HepG2 (cell line): ENCODE measurements at regions of chr5 and their contacts with region 1.

Region 1: DNA sequence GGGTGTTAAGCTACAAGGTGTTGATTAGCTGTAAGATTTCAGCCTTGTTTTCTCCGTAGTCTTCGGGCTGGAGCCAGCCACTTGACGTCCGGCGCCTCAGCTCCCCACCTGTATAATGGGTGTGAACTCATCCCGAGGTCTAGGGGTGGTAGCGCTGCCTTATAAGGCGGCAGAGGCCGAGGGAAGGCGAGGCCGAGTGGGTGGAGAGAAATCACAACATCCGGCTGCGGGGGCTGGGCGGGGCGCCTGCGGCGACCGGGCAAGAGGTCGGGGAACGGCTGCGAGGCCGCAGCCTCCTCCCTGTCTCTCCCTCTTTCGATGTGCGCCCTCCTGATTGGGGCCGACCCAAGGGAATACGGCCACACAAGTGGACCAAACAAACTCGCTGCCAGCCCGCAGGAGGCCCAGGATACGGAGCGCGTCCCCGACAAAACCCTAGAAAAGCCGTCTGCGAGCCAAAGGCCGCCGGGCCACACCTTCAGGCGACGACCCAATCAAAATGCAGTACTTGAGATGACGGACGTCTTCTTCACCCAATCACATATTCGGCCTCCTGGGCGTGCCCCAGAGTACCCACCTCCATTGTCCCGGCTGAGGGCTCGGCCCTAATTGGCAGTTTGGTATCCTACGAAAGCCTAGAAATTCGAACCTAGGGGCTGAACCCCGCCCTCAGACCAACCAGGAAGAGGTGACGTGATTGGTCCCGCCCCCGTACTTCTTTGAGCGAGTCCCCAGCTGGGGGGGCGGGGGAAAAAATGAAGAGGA is 493 bp upstream of the GRK6 start:
- DNase-seq: peak; percentile 100
- ATAC-seq: peak; percentile 94
- H3K4me3 ChIP-seq: peak overlapping the region; percentile 47 to 73 (median 62); a peak in 5 of 6 replicates
- H3K27ac ChIP-seq: peak overlapping the region; percentile 83
- H3K4me1 ChIP-seq: peaks cover 43% of the 10 kb centered on the region
- H3K27me3 ChIP-seq: peaks cover 0 to 14% of the 10 kb centered on the region in 2 experiments; a peak in 2 of 5 replicates
- CTCF ChIP-seq: no peak
- EP300 ChIP-seq: no peak
- POLR2A ChIP-seq: peak in 1 of 2 experiments; percentile 70; a peak in 1 of 4 replicates
- RAD21 ChIP-seq: peak; percentile 45; the same call in 1 of the 2 replicates

Region 2: GRCh38 chr5:177370488-177371119 is 55.4 kb before region 1 on chr5:
- CTCF ChIA-PET with region 1: no interaction called
- POLR2A ChIA-PET with region 1: interaction called, 10 read pairs
- in situ Hi-C with region 1: no loop called
- intact Hi-C with region 1: no loop called
- DNase-seq: peak; percentile 94
- ATAC-seq: peak; percentile 82
- H3K4me3 ChIP-seq: peak overlapping the region in 2 of 3 experiments; percentile 74 to 92; a peak in 3 of 6 replicates
- H3K27ac ChIP-seq: peak overlapping the region; percentile 35
- H3K4me1 ChIP-seq: peaks cover 74% of the 10 kb centered on the region
- H3K27me3 ChIP-seq: no peaks in the 10 kb centered on the region; a peak in 1 of 5 replicates
- CTCF ChIP-seq: peak; percentile 92
- EP300 ChIP-seq: no peak
- POLR2A ChIP-seq: no peak
- RAD21 ChIP-seq: peak; percentile 95

Region 3: GRCh38 chr5:177390363-177391300 is 35.4 kb before region 1 on chr5:
- CTCF ChIA-PET with region 1: no interaction called
- POLR2A ChIA-PET with region 1: interaction called, 12 read pairs
- in situ Hi-C with region 1: no loop called
- intact Hi-C with region 1: no loop called
- DNase-seq: peak; percentile 79
- ATAC-seq: peak; percentile 79
- H3K4me3 ChIP-seq: no peak overlapping the region; a peak in 1 of 6 replicates
- H3K27ac ChIP-seq: no peak overlapping the region
- H3K4me1 ChIP-seq: peaks cover 38% of the 10 kb centered on the region
- H3K27me3 ChIP-seq: peaks cover 4 to 47% of the 10 kb centered on the region in 2 experiments; a peak in 4 of 5 replicates
- CTCF ChIP-seq: peak; percentile 96
- EP300 ChIP-seq: no peak
- POLR2A ChIP-seq: no peak
- RAD21 ChIP-seq: peak; percentile 94

Region 4: GRCh38 chr5:177403792-177404640 is 22.0 kb before region 1 on chr5:
- CTCF ChIA-PET with region 1: interaction called, 3 read pairs
- POLR2A ChIA-PET with region 1: interaction called, 13 read pairs
- in situ Hi-C with region 1: no loop called
- intact Hi-C with region 1: no loop called
- DNase-seq: no peak
- ATAC-seq: peak; percentile 91
- H3K4me3 ChIP-seq: peak overlapping the region; percentile 30 to 70 (median 59); a peak in 5 of 6 replicates
- H3K27ac ChIP-seq: no peak overlapping the region
- H3K4me1 ChIP-seq: peaks cover 20% of the 10 kb centered on the region
- H3K27me3 ChIP-seq: no peaks in the 10 kb centered on the region
- CTCF ChIP-seq: peak; percentile 86
- EP300 ChIP-seq: no peak
- POLR2A ChIP-seq: no peak
- RAD21 ChIP-seq: peak; percentile 80

Region 5: DNA sequence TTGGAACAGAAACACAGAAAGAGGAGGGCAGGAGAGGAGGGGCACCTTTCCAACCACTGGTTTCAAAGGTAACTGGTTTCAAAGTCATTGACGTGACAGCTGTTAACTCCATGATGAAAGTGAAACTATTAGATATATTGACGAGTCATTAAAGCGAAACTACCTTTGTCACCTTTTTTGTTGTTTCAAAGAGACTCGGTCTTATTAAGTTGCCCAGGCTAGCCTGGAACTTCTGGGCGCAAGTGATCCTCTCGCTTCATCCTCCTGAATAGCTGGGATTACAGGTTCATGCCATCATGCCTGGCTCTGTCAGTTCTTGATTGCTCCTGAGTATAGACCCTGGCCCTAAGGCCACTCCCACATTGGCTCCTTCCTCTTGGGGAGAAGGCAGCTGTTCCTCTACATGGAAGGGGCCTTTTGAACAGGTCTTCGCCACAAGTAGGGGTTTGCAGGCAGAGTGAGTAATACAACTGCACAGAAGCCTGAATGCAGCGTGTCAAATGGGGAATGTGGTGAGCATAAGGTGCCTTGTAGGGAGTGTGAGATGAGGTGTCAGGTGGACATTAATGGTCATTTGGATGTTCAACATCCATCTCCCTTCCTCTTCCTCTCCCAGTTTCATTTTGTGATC is 13.3 kb before region 1 on chr5:
- CTCF ChIA-PET with region 1: no interaction called
- POLR2A ChIA-PET with region 1: interaction called, 14 read pairs
- in situ Hi-C with region 1: no loop called
- intact Hi-C with region 1: no loop called
- DNase-seq: no peak
- ATAC-seq: no peak
- H3K4me3 ChIP-seq: peak overlapping the region in 2 of 3 experiments; percentile 8 to 18; a peak in 1 of 6 replicates
- H3K27ac ChIP-seq: no peak overlapping the region
- H3K4me1 ChIP-seq: peaks cover 42% of the 10 kb centered on the region
- H3K27me3 ChIP-seq: 0 out of 5 replicates have a peak, but pooled peaks cover 0 to 9% of the 10 kb centered on the region in 2 experiments
- CTCF ChIP-seq: no peak
- EP300 ChIP-seq: no peak
- POLR2A ChIP-seq: no peak
- RAD21 ChIP-seq: no peak

Region 6: DNA sequence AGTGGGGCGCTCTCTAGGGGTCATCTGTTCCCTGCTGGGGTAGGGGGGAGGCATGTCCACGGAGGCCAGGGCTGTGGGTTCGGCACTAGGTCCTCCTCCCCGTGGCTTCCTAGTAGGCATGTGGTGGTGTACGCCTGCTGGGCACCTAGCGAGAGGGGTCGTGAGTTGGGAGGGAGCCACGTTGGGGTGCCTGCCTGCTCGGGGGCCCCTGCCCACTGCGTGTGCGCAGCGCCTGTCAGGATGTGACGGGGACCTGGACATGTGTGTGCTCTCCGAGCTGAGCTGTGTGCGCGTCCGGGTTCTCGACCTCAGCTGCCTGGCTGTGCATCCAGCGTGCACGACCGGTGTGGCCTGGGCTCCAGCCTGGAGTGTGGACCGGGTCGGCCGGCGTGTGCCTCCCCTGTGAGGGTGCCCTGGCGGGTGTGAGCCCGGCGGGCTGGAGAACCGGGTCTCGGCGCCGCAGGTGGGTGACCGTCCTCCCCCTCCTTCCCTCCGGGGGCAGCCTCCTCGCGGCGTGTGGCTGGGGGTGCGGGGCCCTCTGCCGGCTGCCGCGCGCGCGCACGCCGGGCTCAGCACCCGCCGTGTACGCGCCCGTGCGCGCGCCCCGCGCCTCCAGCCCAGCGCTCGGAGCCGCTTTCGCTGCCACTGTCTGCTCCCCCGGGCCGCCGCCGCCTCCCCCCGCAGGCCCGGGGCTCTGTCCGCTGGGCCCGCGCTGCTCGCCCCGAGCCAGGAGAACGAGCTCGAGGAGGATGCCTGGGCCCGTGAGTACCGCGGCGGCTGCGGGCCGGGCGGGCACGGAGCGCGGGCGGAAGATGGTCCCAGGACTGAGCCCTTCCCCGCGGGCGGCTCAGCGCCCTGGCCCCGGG is 20.4 kb after region 1 on chr5 and contains the start of gene PRR7:
- CTCF ChIA-PET with region 1: no interaction called
- POLR2A ChIA-PET with region 1: interaction called, 19 read pairs
- in situ Hi-C with region 1: no loop called
- intact Hi-C with region 1: no loop called
- DNase-seq: no peak
- ATAC-seq: peak; percentile 27
- H3K4me3 ChIP-seq: peak within 1 kb of the TSS; percentile 55 to 80 (median 61)
- H3K27ac ChIP-seq: peak within 1 kb of the TSS; percentile 74
- H3K4me1 ChIP-seq: peaks cover 49% of the 10 kb centered on the region
- H3K27me3 ChIP-seq: no peaks in the 10 kb centered on the region
- CTCF ChIP-seq: peak; percentile 18
- EP300 ChIP-seq: no peak
- POLR2A ChIP-seq: peak in 1 of 2 experiments; percentile 41; a peak in 1 of 4 replicates
- RAD21 ChIP-seq: peak; percentile 65
- total RNA-seq, gene PRR7: 3.9 and 5.0 TPM in 2 replicates